HEK293 (cell line): ENCODE measurements at regions of chr2 and their contacts with region 1.

Region 1: GRCh38 chr2:205220559-205220958 is 461.7 kb upstream of the NRP2 start:
- H3K4me3 ChIP-seq: no peak overlapping the region
- H3K27ac ChIP-seq: no peak overlapping the region
- H3K4me1 ChIP-seq: no peaks in the 10 kb centered on the region
- CTCF ChIP-seq: no peak

Region 2: DNA sequence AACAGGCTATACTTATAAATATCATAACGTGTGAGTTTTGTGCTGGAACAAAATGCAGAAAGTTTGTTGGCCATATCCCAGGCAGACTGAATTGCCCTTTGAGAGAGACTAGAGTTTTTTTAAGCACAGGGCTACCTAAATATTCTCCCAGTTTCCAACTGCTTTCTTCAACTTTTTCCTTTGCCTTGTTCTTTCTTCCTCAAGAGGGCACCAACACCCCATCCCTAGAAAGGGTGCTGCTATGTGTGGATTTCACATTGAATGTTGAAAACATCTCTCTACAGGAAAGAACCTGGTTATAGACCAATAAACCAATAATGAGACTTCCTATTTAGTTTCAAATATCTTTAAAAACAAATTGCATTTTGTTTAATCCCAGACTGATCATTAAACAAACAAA is 1196.1 kb before region 1 on chr2:
- CTCF ChIA-PET with region 1: no interaction called
- POLR2A ChIA-PET with region 1: interaction called, 11 read pairs
- H3K4me3 ChIP-seq: no peak overlapping the region
- H3K27ac ChIP-seq: no peak overlapping the region
- H3K4me1 ChIP-seq: peaks cover 6% of the 10 kb centered on the region; the same call in 1 of the 2 replicates
- CTCF ChIP-seq: peak; percentile 52; the same call in 1 of the 2 replicates